Right ventricle myocardium inferior (tissue), 1 donor: ENCODE measurements at regions of chr9 and their contacts with region 1.

Region 1: GRCh38 chr9:99162759-99163364 is 57.9 kb downstream of the TGFBR1 start:
- DNase-seq: no peak
- ATAC-seq: no peak

Region 2: GRCh38 chr9:99824378-99825171 is 661.7 kb after region 1 on chr9:
- intact Hi-C with region 1: no loop called
- DNase-seq: peak; percentile 53
- ATAC-seq: no peak

Region 3: DNA sequence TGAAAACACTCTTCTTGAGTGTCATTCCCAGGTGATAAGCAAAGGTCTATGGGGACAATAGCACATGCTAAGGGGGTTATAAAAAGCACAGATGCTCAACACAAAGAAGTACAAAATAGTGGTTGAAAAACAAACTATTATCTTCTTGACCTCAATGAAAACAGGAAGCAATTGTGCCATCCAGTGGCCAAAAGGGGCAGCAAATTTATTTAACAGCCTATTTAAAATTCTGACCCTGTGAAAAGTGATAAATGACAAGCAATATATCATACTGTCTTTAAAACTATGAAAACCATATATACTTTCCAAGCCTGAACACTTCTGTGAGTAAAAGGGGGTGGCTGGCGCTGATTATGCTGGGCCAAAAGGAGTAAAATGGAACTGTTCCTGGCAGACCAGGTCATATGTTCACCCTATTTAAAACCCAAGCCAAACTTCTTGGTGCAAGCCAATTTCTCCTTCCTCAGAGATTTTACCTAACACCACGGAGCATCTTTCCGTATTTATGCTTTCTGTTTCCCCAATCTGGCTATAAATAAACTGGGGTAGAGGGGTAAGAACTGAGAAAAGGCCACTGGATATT is 1160.2 kb after region 1 on chr9:
- intact Hi-C with region 1: loop called (anchors 10 kb)
- DNase-seq: no peak
- ATAC-seq: no peak

Region 4: DNA sequence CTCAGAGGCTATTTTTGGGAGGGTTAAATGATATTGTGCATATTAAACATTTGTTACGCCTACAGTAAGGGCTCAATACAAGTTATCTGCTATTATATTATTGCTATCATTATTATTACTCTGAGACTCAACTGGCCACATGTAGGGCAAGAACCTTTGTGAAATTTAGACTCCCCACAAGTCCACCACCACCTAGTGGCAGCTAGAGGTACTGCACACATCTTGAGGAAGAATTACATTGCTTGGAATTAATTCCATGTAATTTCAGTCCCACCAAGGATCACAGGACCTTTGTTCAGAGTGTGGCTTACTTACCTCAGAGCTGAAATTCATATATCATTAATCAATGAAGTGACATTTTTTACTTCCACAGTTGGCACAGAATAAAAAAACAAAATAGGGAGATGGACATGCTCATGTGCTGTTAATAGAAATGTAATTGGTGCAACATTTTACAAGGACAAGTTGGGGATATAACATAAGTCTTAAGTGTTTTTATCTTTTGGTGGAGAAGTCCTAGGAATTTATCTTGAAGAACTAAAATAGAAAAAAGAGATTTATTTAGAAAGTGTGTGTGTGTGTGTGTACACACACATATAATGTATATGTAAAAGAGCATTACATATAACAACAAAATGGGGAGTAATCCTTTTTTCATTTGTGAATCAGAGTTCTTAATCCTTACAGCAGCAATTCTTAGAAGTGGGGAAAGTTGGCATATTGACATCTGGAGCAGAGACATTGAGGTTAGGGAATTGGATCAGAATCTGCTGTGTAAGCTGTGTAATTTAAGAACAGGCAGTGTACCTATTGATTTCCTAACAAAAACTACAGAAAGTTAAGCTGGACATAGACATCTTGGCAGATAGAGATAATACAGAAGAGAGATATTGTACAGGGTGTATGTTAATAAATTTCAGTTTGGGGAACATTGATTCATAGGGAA is 1275.3 kb after region 1 on chr9:
- intact Hi-C with region 1: loop called (anchors 10 kb)
- DNase-seq: no peak
- ATAC-seq: peak; percentile 46